HepG2 (cell line): ENCODE measurements at regions of chr20 and their contacts with region 1.

Region 1: GRCh38 chr20:14291502-14291901 is 45.9 kb downstream of the FLRT3 start:
- DNase-seq: no peak
- ATAC-seq: no peak
- H3K4me3 ChIP-seq: no peak overlapping the region
- H3K27ac ChIP-seq: no peak overlapping the region
- H3K4me1 ChIP-seq: no peaks in the 10 kb centered on the region
- H3K27me3 ChIP-seq: no peaks in the 10 kb centered on the region
- CTCF ChIP-seq: no peak
- EP300 ChIP-seq: no peak
- POLR2A ChIP-seq: no peak
- RAD21 ChIP-seq: no peak

Region 2: GRCh38 chr20:13412806-13413445 is 878.6 kb before region 1 on chr20:
- CTCF ChIA-PET with region 1: no interaction called
- POLR2A ChIA-PET with region 1: no interaction called
- in situ Hi-C with region 1: no loop called
- intact Hi-C with region 1: loop called (anchors 5 kb)
- DNase-seq: no peak
- ATAC-seq: no peak
- H3K4me3 ChIP-seq: no peak overlapping the region
- H3K27ac ChIP-seq: no peak overlapping the region
- H3K4me1 ChIP-seq: peaks cover 25% of the 10 kb centered on the region
- H3K27me3 ChIP-seq: no peaks in the 10 kb centered on the region
- CTCF ChIP-seq: no peak
- EP300 ChIP-seq: no peak
- POLR2A ChIP-seq: no peak
- RAD21 ChIP-seq: no peak

Region 3: DNA sequence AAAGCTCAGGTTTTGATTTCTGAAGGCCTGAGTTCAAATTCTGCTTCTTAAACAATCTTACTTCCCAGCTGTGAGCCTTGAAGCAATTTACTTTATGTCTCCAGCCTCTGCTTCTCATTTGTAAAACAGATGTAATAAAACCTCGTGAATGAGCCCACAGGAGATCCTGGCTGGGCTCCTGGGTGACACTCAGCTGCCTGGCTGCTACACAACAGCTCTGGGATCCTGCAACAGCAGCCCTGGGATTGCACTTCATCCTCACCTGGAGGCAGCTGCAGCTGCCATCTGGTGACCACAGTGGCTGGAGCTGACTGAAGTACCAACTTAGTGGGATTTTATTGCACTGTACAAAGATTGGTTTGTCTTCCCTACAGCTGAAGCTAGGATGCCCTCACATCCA is 408.1 kb before region 1 on chr20:
- CTCF ChIA-PET with region 1: no interaction called
- POLR2A ChIA-PET with region 1: no interaction called
- in situ Hi-C with region 1: no loop called
- intact Hi-C with region 1: no loop called
- DNase-seq: no peak
- ATAC-seq: peak; percentile 38; the same call in 2 of the 3 replicates
- H3K4me3 ChIP-seq: no peak overlapping the region
- H3K27ac ChIP-seq: no peak overlapping the region
- H3K4me1 ChIP-seq: no peaks in the 10 kb centered on the region
- H3K27me3 ChIP-seq: no peaks in the 10 kb centered on the region; a peak in 2 of 5 replicates
- CTCF ChIP-seq: 0 out of 2 replicates have a peak, but pooled peaks have one; percentile 19
- EP300 ChIP-seq: no peak
- POLR2A ChIP-seq: no peak
- RAD21 ChIP-seq: no peak

Region 4: GRCh38 chr20:14580418-14581074 is 289.0 kb after region 1 on chr20:
- CTCF ChIA-PET with region 1: no interaction called
- POLR2A ChIA-PET with region 1: no interaction called
- in situ Hi-C with region 1: no loop called
- intact Hi-C with region 1: no loop called
- DNase-seq: no peak
- ATAC-seq: no peak
- H3K4me3 ChIP-seq: no peak overlapping the region
- H3K27ac ChIP-seq: no peak overlapping the region
- H3K4me1 ChIP-seq: no peaks in the 10 kb centered on the region
- H3K27me3 ChIP-seq: no peaks in the 10 kb centered on the region
- CTCF ChIP-seq: no peak
- EP300 ChIP-seq: no peak
- POLR2A ChIP-seq: no peak
- RAD21 ChIP-seq: no peak